Vagina (tissue), 2 donors: ENCODE measurements at regions of chr10 and their contacts with region 1.

Region 1: DNA sequence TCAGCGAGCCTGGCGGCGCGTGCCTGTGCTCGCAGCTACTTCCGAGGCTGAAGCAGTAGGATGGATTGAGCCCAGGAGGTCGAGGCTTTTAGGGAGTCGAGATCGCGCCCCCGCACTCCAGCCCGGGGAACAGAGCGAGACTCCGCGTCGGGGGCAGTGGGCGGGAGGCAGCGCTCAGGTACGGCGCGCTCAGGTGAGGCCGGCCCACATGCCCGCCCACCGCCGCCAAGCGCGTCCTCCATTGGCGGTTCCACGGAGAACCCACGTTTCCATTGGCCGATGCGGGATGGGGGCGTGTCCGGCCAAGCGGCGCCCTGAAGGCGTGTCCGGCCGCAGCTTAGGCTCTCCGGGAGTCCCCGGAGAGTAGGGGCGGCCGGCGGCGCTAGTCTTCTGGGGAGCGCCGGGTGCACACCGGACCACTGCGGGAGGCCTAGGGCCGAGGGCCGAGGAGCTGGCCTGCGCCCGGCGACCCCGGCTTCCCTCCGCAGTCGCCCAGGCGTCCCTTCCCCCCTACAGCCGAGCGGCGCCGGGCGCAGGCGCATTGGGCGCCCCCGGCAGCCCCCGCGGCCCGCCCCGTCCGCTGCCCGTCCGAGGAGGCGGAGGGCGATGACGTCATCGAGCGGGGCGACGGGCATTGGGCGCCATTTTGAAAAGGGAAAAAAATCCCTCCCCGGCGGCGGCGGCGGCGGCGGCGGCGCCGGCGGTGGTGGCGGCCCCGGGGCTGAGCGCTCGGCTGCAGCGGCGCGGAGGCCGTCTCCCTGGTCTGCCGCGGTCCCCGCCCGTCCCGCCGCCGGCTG is at the start of gene PPP2R2D:
- DNase-seq: peak in 1 of 2 donors; percentile 94
- H3K4me3 ChIP-seq: peak within 1 kb of the TSS; percentile 91 to 98
- H3K27ac ChIP-seq: peak within 1 kb of the TSS; percentile 94
- H3K4me1 ChIP-seq: peaks cover 47% of the 10 kb centered on the region
- H3K27me3 ChIP-seq: no peaks in the 10 kb centered on the region
- CTCF ChIP-seq: no peak
- POLR2A ChIP-seq: peak in 1 of 2 donors; percentile 26
- total RNA-seq, gene PPP2R2D: 49.4 TPM

Region 2: DNA sequence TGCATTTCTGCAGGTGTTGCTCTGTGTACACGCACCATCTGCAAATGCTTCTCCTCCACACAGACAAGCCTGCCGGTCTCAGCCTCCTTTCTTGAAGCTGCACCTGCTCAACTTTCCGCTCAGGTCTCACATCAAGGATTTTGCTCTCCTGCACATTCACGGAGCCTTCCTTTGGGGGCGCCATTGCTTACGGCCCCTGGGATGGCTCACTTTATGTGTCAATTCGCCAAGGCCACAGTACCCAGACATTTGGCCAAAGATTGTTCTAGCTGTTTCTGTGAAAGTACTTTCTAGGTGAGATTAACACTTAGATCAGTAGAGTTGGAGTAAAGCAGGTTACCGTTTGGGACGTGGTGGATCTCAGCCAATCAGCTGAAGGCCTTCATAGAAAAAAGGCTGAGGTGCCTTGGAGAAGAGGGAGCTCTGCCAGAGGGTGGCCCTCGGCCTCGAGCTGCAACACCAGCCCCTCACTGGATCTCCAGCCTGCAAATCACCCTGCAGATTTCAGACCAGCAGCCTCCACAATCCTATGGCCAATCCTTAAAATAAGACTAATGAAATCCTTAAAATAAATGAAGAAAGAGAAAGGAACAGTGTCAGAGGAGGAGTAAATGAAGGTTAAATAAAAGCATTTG is 39.6 kb before region 1 on chr10:
- intact Hi-C with region 1: no loop called
- DNase-seq: no peak
- H3K4me3 ChIP-seq: no peak overlapping the region
- H3K27ac ChIP-seq: no peak overlapping the region
- H3K4me1 ChIP-seq: no peaks in the 10 kb centered on the region
- H3K27me3 ChIP-seq: no peaks in the 10 kb centered on the region
- CTCF ChIP-seq: no peak
- POLR2A ChIP-seq: no peak

Region 3: GRCh38 chr10:131961777-131962662 is 61.5 kb after region 1 on chr10:
- intact Hi-C with region 1: loop called (anchors 10 kb)
- DNase-seq: no peak
- H3K4me3 ChIP-seq: no peak overlapping the region
- H3K27ac ChIP-seq: no peak overlapping the region
- H3K4me1 ChIP-seq: no peaks in the 10 kb centered on the region
- H3K27me3 ChIP-seq: no peaks in the 10 kb centered on the region
- CTCF ChIP-seq: no peak
- POLR2A ChIP-seq: no peak

Region 4: DNA sequence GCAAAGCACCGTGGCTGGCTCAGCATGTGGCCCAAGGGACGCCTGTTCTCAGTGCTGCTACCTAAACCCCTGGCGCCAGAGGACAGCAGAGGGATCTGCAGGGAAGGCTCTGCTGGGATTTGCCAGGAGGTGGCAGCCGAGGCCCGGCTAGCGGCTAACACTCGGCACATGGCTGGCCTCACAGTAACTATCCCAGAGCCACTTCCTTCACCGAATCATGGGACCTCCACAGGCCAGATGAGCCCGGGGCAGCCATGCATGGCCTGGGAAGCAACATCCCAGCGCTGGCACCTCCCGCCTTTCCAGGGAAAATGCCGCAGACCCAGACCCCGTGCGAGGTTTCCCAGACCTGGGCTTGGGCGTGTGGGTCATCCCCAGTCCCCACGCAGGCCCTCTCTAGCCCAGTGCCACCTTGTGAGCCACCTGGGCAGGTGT is 322.6 kb after region 1 on chr10:
- intact Hi-C with region 1: no loop called
- DNase-seq: no peak
- H3K4me3 ChIP-seq: no peak overlapping the region
- H3K27ac ChIP-seq: no peak overlapping the region
- H3K4me1 ChIP-seq: peaks cover 5% of the 10 kb centered on the region
- H3K27me3 ChIP-seq: no peaks in the 10 kb centered on the region
- CTCF ChIP-seq: peak; percentile 64 to 80 (median 70)
- POLR2A ChIP-seq: no peak

Region 5: GRCh38 chr10:132331526-132332432 is 431.2 kb after region 1 on chr10 and contains the start of gene LRRC27:
- intact Hi-C with region 1: loop called (anchors 10 kb)
- DNase-seq: peak in 1 of 2 donors; percentile 98
- H3K4me3 ChIP-seq: peak within 1 kb of the TSS; percentile 63 to 86
- H3K27ac ChIP-seq: peak within 1 kb of the TSS; percentile 65
- H3K4me1 ChIP-seq: peaks cover 49% of the 10 kb centered on the region
- H3K27me3 ChIP-seq: no peaks in the 10 kb centered on the region
- CTCF ChIP-seq: no peak
- POLR2A ChIP-seq: peak in 1 of 2 donors; percentile 24
- total RNA-seq, gene LRRC27: 4.9 TPM

Region 6: GRCh38 chr10:133230387-133231195 is 1330.0 kb after region 1 on chr10:
- intact Hi-C with region 1: no loop called
- DNase-seq: no peak
- H3K4me3 ChIP-seq: peak overlapping the region in 1 of 2 donors; percentile 31
- H3K27ac ChIP-seq: no peak overlapping the region
- H3K4me1 ChIP-seq: peaks cover 7% of the 10 kb centered on the region
- H3K27me3 ChIP-seq: peaks cover 4% of the 10 kb centered on the region
- CTCF ChIP-seq: no peak
- POLR2A ChIP-seq: no peak